Heart right ventricle (tissue), 16 donors: ENCODE measurements at regions of chr16 and their contacts with region 1.

Region 1: DNA sequence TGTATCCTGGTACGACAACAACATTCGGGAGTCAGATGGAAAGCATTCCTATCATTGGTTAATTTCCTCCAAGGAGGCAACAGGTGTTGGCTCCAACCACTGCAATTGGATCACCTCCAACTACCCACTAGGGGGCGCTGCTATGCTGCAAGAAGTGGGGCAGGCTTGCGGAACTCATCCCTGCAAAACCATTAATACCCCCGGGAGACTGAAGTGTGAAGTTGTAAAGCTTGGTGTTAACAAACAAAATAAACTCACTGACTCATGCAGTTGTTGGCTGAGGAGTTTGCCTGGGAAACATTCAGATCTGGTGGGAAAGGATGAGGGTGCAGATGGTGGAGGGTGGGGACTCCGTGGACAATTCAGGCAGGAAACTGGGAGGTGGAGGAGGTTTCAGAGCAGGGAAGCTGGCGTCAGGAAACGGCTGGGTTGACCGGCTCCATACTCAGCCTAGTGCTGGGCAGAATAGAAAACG is 84.9 kb downstream of the HS3ST2 start:
- DNase-seq: peak; percentile 66 to 88
- ATAC-seq: peak; percentile 84 to 97 (median 93)
- H3K4me3 ChIP-seq: no peak overlapping the region
- H3K27ac ChIP-seq: peak overlapping the region in 4 of 10 donors; percentile 25 to 64 (median 41)
- H3K4me1 ChIP-seq: peaks cover 0 to 18% (median 11%) of the 10 kb centered on the region in 9 donors
- H3K27me3 ChIP-seq: peaks cover 0 to 54% (median 29%) of the 10 kb centered on the region in 7 donors
- CTCF ChIP-seq: peak; percentile 83 to 95 (median 89)

Region 2: GRCh38 chr16:22942811-22943210 is 43.9 kb after region 1 on chr16:
- intact Hi-C with region 1: loop called in 7 of 10 experiments (anchors 2 to 5 kb)
- DNase-seq: no peak
- ATAC-seq: no peak
- H3K4me3 ChIP-seq: no peak overlapping the region
- H3K27ac ChIP-seq: no peak overlapping the region
- H3K4me1 ChIP-seq: peaks cover 0 to under 1% (median 0%) of the 10 kb centered on the region in 9 donors
- H3K27me3 ChIP-seq: peaks cover 0 to 35% (median 25%) of the 10 kb centered on the region in 7 donors
- CTCF ChIP-seq: no peak

Region 3: DNA sequence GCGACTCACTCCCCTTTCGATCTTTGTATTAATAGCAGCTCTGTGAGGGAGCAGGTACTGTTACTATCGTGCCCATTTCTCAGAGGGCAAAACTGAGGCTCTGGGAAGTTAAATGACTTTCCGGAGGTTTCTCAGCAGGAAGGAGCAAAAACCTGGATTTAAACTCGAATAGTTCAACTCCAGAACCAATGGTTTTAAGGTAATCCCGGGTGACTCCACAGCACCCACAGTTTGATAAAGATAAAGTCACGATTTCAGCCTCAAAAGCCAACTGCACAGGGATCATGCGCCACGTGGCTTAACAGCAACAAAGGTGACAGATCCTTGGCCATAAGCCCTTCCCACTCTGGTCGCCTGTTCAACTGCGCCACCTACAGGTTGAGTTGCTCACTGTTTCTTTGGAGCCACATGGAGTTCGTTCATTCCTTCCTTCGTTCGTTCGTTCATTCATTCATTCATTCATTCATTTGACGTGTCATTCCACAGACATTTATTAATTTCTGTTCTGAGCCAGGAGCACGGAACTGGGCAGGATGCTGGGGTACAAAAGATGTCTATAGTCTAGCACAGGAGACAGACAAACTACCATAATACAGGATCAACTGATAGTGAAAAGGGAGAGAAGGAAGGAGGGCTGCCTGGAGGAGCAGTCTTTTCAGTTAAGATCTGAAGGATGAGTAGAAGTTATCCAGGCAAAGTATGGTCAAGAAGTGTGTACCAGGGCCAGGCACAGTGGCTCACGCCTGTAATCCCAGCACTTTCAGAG is 49.9 kb after region 1 on chr16:
- intact Hi-C with region 1: loop called in 7 of 10 experiments (anchors 2 to 5 kb)
- DNase-seq: peak; percentile 45 to 68
- ATAC-seq: peak; percentile 69 to 92 (median 84)
- H3K4me3 ChIP-seq: peak overlapping the region in 7 of 10 donors; percentile 1 to 39 (median 29)
- H3K27ac ChIP-seq: no peak overlapping the region
- H3K4me1 ChIP-seq: peaks cover 0 to 16% (median 9%) of the 10 kb centered on the region in 9 donors
- H3K27me3 ChIP-seq: peaks cover 0 to 49% (median 31%) of the 10 kb centered on the region in 7 donors
- CTCF ChIP-seq: peak; percentile 65 to 85 (median 72)

Region 4: GRCh38 chr16:22977294-22977697 is 78.4 kb after region 1 on chr16:
- intact Hi-C with region 1: loop called in 3 of 10 experiments (anchors 2 to 10 kb)
- DNase-seq: no peak
- ATAC-seq: peak in 1 of 8 donors; percentile 37
- H3K4me3 ChIP-seq: no peak overlapping the region
- H3K27ac ChIP-seq: no peak overlapping the region
- H3K4me1 ChIP-seq: no peaks in the 10 kb centered on the region
- H3K27me3 ChIP-seq: peaks cover 0 to 30% (median 10%) of the 10 kb centered on the region in 7 donors
- CTCF ChIP-seq: peak in 6 of 9 donors; percentile 23 to 60 (median 50)

Region 5: DNA sequence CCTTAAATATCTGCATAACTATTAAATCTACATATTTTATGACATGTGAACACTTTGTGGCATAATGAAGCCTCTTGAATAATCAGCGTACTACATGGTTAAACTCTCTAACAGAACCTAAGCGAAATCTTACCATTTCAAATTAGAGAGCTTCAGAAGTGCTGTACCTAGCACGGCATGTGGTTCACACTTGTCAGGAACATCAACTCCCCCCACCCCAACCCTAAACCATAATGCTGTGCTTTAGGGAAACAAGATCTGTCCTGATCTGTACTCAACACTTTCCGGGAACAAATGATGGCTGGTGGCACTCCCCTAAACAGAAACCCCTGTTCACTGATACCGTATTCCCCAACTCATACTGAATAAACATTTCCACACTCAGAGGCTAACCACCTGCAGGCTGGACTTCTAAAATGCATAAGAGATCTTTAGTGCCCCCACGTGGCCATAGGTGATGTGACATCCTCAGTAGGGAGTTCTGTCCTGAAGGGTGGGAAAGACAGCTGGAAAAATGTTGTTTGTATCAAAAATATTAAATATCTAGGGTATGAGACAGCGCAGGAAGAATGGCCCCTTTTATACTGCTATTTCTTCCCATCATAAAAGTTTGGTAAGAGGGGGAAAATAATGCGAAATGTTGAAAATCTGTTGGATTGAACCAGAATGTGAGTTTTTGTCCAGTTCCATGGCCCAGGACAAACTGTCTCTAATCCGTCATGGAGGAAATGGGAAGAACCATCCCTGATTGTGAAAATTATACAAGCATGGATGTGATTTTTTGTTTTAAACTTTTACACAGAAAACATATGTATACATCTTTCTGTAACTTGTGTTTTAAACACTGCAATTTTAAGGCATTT is 161.8 kb after region 1 on chr16:
- intact Hi-C with region 1: loop called in 7 of 10 experiments (anchors 2 to 5 kb)
- DNase-seq: peak in 1 of 2 donors; percentile 71
- ATAC-seq: peak; percentile 65 to 89 (median 82)
- H3K4me3 ChIP-seq: no peak overlapping the region
- H3K27ac ChIP-seq: no peak overlapping the region
- H3K4me1 ChIP-seq: peaks cover 0 to 13% (median 8%) of the 10 kb centered on the region in 9 donors
- H3K27me3 ChIP-seq: no peaks in the 10 kb centered on the region
- CTCF ChIP-seq: peak; percentile 63 to 90 (median 85)

Region 6: DNA sequence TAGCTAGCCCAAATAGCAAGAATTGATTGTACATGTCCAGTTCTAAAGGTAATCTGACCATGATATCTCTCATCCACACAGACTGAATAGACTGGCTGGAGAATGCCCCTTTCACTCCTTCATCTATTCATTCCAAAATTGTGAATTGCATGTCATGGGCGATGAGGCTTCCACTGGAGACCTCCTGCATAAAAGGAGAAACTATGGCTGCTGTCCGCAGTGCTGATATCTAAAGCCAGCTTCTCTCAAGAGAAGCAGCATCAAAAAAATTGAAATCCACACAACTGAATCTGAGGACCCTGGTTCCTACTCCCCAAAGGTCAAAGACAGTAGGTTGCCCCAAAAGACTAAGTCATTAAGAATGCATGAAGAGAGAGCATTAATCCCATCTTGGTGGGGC is 275.7 kb after region 1 on chr16:
- intact Hi-C with region 1: loop called in 1 of 10 experiments (anchors 10 kb)
- DNase-seq: no peak
- ATAC-seq: no peak
- H3K4me3 ChIP-seq: no peak overlapping the region
- H3K27ac ChIP-seq: no peak overlapping the region
- H3K4me1 ChIP-seq: no peaks in the 10 kb centered on the region
- H3K27me3 ChIP-seq: peaks cover 0 to 57% (median 19%) of the 10 kb centered on the region in 7 donors
- CTCF ChIP-seq: no peak

Region 7: GRCh38 chr16:23435500-23435899 is 536.6 kb after region 1 on chr16:
- intact Hi-C with region 1: loop called in 5 of 10 experiments (anchors 2 to 10 kb)
- DNase-seq: peak; percentile 28 to 41
- ATAC-seq: peak; percentile 55 to 77 (median 69)
- H3K4me3 ChIP-seq: no peak overlapping the region
- H3K27ac ChIP-seq: peak overlapping the region in 1 of 10 donors; percentile 27
- H3K4me1 ChIP-seq: peaks cover 0 to 16% (median 0%) of the 10 kb centered on the region in 9 donors
- H3K27me3 ChIP-seq: no peaks in the 10 kb centered on the region
- CTCF ChIP-seq: peak; percentile 61 to 87 (median 76)